RWPE1 (cell line): ENCODE measurements at regions of chr14 and their contacts with region 1.

Region 1: GRCh38 chr14:103910262-103910935 is 17.9 kb upstream of the TDRD9 start:
- DNase-seq: peak; percentile 94
- H3K27ac ChIP-seq: peak overlapping the region; percentile 65
- CTCF ChIP-seq: peak; percentile 91

Region 2: GRCh38 chr14:103808403-103809001 is 101.9 kb before region 1 on chr14:
- CTCF ChIA-PET with region 1: interaction called, 36 read pairs
- POLR2A ChIA-PET with region 1: interaction called, 9 read pairs
- DNase-seq: peak; percentile 69
- H3K27ac ChIP-seq: no peak overlapping the region
- CTCF ChIP-seq: peak; percentile 92